Activated CD4-positive, alpha-beta memory T cell treated with anti-CD3 and anti-CD28 coated beads, Interleukin-2, amount 10 ng/mL, durations not matched to agents 7 days and 5 days (primary cell): ENCODE measurements at regions of chr20 and their contacts with region 1.

Region 1: GRCh38 chr20:37192137-37192854 is 12.9 kb upstream of the MROH8 start:
- DNase-seq: peak; percentile 80
- H3K4me3 Mint-ChIP-seq: no peak overlapping the region
- H3K27ac Mint-ChIP-seq: no peak overlapping the region
- H3K4me1 Mint-ChIP-seq: peaks cover 67% of the 10 kb centered on the region
- H3K27me3 Mint-ChIP-seq: no peaks in the 10 kb centered on the region

Region 2: DNA sequence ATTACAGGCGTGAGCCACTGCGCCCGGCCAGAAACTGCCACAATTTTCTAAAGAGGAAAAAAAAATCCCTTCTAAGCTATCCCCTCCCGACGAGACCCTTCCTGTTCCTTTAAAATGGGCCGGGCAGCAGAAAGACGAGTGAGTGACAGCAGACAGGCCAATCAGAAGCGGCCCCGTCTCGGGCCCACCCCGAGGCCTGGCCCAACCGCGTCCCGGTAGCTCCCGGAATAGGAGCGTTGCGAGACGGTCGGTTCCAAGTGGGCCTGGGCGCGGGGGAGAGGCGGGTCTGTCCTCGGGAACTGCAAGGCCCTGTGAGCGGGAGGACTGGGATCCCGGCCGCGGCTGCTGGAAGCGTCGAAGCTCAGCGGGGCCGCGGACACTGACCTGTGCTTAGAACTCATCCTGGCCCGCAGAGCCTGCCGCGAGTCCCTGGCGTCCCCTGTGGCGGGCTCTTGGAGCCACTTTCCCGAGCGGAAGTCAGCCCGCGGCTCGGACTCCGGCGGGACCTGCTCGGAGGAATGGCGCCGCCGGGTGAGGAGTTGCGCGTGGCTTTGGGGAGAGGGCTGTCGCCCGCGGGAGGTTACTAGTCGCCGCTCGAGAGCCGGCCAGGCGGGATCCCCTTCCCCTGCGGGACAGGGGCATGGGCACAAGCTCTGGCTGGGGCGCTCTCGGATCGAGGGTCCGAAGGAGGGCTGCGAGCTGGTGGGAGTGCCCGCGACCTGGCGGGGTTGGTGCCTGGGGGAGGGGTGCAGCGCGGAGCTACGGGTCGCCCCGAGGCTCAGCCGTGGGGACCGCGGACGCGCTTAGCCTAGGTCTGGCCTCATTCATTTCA is 13.2 kb before region 1 on chr20 and contains the starts of genes MROH8 and RPN2:
- CTCF ChIA-PET with region 1: interaction called, 79 read pairs
- POLR2A ChIA-PET with region 1: interaction called, 43 read pairs
- DNase-seq: peak; percentile 97
- H3K4me3 Mint-ChIP-seq: peak within 1 kb of the TSS; percentile 92
- H3K27ac Mint-ChIP-seq: peak within 1 kb of the TSS; percentile 94
- H3K4me1 Mint-ChIP-seq: peaks cover 37% of the 10 kb centered on the region
- H3K27me3 Mint-ChIP-seq: no peaks in the 10 kb centered on the region
- total RNA-seq, gene MROH8: 1.7 to 2.2 TPM
- total RNA-seq, gene RPN2: 168 to 179 TPM

Region 3: DNA sequence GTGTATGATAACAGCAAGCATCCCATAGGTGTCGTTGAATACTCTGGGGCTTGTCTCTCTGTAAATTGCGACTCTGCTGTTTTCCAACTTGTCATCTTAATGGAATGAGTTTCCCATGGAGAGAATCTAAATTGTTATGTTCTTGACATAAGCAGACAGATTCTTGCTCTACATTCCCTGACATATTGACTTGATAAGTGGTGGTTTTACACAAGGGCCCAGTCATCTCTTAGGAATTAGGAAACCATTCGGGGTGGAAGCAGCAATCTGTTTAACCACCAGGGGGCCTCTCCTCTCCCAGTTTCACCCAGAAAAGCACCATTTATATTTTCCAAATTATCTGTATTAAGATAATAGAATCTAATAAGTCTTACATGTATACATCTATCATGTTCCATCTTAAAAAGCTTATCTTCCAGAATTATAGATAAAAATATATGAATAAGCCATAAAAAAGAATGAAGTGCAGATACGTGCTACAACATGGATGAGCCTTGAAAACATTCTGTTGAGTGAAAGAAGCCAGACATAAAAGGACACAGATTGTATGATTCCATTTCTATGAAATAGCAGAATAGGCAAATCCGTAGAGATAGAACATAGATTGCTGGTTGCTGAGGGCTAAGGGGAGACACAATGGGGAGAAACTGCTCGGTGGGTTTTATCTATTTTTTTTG is 10.1 kb after region 1 on chr20:
- CTCF ChIA-PET with region 1: interaction called, 21 read pairs
- POLR2A ChIA-PET with region 1: no interaction called
- DNase-seq: peak; percentile 20
- H3K4me3 Mint-ChIP-seq: no peak overlapping the region
- H3K27ac Mint-ChIP-seq: no peak overlapping the region
- H3K4me1 Mint-ChIP-seq: no peaks in the 10 kb centered on the region
- H3K27me3 Mint-ChIP-seq: no peaks in the 10 kb centered on the region

Region 4: GRCh38 chr20:37209661-37210314 is 17.5 kb after region 1 on chr20:
- CTCF ChIA-PET with region 1: interaction called, 17 read pairs
- POLR2A ChIA-PET with region 1: interaction called, 3 read pairs
- DNase-seq: peak; percentile 1
- H3K4me3 Mint-ChIP-seq: no peak overlapping the region
- H3K27ac Mint-ChIP-seq: no peak overlapping the region
- H3K4me1 Mint-ChIP-seq: no peaks in the 10 kb centered on the region
- H3K27me3 Mint-ChIP-seq: no peaks in the 10 kb centered on the region

Region 5: GRCh38 chr20:37534401-37535157 is 342.3 kb after region 1 on chr20:
- CTCF ChIA-PET with region 1: interaction called, 23 read pairs
- POLR2A ChIA-PET with region 1: interaction called, 6 read pairs
- DNase-seq: peak; percentile 45
- H3K4me3 Mint-ChIP-seq: no peak overlapping the region
- H3K27ac Mint-ChIP-seq: no peak overlapping the region
- H3K4me1 Mint-ChIP-seq: peaks cover 3% of the 10 kb centered on the region
- H3K27me3 Mint-ChIP-seq: peaks cover 14% of the 10 kb centered on the region